ENCODE measurements at regions of chr19 and their contacts with region 1.

Region 1: DNA sequence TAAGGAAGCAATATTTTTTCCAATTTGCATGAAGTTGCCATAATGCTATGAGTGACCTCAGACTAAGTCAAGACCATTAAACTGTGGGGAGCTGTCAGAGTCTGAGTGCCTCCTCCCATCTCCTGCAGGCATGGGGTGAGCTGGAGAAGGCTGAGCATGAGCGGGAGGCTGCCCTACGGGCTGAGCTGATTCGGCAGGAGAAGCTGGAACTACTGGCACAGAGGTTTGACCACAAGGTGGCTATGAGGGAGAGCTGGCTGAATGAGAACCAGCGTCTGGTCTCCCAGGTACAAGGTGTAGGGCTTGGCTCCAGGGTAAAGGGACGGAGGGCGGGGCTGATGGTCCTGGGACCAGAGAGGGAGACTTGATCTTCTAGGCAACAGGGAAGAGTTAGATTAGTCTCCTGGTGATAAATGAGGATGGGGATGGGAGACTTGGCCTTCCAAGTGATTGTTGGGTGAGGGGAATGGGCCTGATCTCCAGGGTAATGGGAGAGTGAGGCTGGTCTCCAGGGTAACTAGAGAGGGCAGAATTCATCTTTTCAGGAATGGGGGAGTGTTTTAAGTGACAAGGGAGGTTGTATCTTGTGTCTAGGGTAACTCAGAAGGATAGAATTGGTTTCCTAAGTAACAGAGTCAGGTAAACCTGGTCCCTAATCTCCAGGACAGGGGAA is 36.0 kb downstream of the SPTBN4 start:
- DNase-seq: peak; percentile 21
- ATAC-seq: no peak; the same call in 1 of the 2 replicates
- H3K4me3 ChIP-seq: no peak overlapping the region
- H3K27ac ChIP-seq: no peak overlapping the region
- H3K4me1 ChIP-seq: no peaks in the 10 kb centered on the region
- H3K27me3 ChIP-seq: no peaks in the 10 kb centered on the region
- CTCF ChIP-seq: 0 out of 2 replicates have a peak, but pooled peaks have one; percentile 22

Region 2: DNA sequence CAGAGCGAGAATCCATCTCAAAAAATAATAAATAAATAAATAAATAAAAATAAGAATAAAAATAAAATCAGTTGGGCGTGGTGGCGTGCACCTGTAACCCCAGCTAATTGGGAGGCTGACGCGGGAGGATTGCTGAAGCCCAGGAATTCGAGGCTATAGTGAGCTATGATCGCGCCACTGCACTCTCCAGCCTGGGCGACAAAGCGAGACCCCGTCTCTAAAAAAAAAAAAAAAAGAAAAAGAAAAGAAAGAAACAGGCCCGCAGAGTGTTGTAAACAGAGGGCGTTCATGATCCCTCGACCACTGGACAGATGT is 82.4 kb before region 1 on chr19:
- CTCF ChIA-PET with region 1: interaction called, 11 read pairs
- POLR2A ChIA-PET with region 1: no interaction called
- intact Hi-C with region 1: no loop called
- DNase-seq: no peak
- ATAC-seq: no peak
- H3K4me3 ChIP-seq: peak overlapping the region; percentile 76
- H3K27ac ChIP-seq: peak overlapping the region; percentile 70
- H3K4me1 ChIP-seq: peaks cover 10% of the 10 kb centered on the region
- H3K27me3 ChIP-seq: no peaks in the 10 kb centered on the region
- CTCF ChIP-seq: no peak

Region 3: DNA sequence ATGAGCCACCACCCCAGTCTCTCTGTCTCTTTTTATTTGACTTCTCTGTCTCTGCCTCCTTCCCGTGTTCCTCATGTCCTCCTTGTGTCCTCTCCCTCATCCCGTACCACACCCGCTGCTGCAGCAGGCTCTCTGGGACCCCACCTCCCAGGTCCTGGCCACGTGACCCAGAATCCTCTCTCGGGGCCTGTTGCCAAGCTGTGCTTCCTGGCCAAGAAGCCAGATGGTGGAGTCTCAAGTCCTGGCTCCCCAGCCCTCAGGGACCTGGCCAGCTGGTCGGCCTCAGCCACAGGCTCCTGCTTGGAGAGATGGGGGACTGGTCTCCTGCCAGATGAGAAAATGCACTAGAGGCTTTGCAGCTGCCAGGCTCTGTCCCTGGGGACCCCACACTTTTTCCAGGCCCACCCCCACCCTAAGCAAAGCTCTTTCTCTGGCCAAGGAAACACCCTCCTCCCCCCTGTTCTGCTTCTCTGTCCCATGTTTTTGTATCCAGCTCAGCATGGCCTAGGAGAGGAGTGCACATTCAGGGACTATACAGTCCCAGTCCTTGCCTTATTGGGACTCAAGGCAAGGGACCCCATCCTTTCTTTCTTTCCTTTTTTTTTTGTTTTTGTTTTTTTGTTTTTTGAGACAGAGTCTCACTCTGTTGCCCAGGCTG is 39.5 kb after region 1 on chr19:
- CTCF ChIA-PET with region 1: no interaction called
- POLR2A ChIA-PET with region 1: no interaction called
- intact Hi-C with region 1: no loop called
- DNase-seq: no peak
- ATAC-seq: no peak
- H3K4me3 ChIP-seq: no peak overlapping the region
- H3K27ac ChIP-seq: no peak overlapping the region
- H3K4me1 ChIP-seq: no peaks in the 10 kb centered on the region
- H3K27me3 ChIP-seq: no peaks in the 10 kb centered on the region
- CTCF ChIP-seq: no peak